Right ventricle myocardium inferior (tissue), 1 donor: ENCODE measurements at regions of chr7 and their contacts with region 1.

Region 1: GRCh38 chr7:519484-520390 is at the start of gene PDGFA:
- DNase-seq: no peak
- ATAC-seq: peak; percentile 30
- total RNA-seq, gene PDGFA: 37.2 TPM

Region 2: GRCh38 chr7:332646-333392 is 186.9 kb before region 1 on chr7:
- intact Hi-C with region 1: loop called (anchors 2 kb)
- DNase-seq: peak; percentile 90
- ATAC-seq: peak; percentile 92

Region 3: GRCh38 chr7:636396-636795 is 116.7 kb after region 1 on chr7:
- intact Hi-C with region 1: loop called (anchors 5 kb)
- DNase-seq: no peak
- ATAC-seq: no peak

Region 4: GRCh38 chr7:668139-668931 is 148.6 kb after region 1 on chr7:
- intact Hi-C with region 1: loop called (anchors 2 kb)
- DNase-seq: no peak
- ATAC-seq: no peak